ENCODE measurements at regions of chr18 and their contacts with region 1.

Region 1: GRCh38 chr18:42114310-42114943 is 159.4 kb downstream of the PIK3C3 start:
- DNase-seq: peak; percentile 80
- ATAC-seq: peak; percentile 97
- H3K4me3 Mint-ChIP-seq: no peak overlapping the region
- H3K27ac Mint-ChIP-seq: peak overlapping the region; percentile 86
- H3K4me1 Mint-ChIP-seq: peaks cover 15% of the 10 kb centered on the region
- H3K27me3 Mint-ChIP-seq: peaks cover 12% of the 10 kb centered on the region

Region 2: DNA sequence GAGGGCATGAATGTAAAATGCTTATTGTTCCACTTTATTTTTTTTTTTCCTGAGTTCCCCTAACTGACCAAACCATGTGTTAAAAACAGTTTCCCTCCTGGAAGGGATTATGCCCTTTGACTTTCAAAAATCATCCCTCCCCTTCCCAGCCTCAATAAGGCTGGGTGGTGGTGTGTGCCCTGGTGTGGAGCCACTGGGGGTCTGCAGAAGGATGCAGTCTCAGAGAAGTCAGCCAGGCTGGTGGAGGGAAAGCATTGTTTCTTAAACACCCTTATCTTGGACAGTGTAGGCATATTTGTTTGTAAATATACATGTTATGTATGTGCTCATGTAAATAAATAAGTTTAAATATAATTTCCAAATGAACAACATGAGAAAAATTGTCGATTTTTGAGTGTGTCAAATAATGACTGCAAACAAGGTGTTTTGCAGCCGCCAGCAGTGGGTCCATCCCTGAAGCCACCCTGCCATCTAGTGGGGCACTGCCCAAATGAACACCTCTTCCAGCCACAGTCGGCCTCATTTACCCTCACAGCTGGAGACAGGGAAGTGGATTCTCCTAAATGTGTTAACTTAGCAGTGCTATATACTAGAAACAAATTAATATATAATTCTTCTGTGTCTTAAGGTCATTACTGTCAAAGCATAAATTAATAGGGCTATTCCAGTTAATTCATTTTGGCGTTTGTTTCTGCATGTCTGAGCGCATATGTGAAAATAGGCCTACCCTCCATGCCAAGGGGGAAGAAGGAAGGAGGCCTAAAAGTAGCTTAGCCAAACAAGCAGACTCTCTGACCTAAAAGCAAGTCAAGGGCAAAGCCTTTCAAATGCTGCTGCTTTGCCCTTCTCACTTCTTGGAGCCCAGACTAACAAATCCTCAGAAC is 369.0 kb before region 1 on chr18:
- CTCF ChIA-PET with region 1: no interaction called
- DNase-seq: peak; percentile 43
- ATAC-seq: no peak
- H3K4me3 Mint-ChIP-seq: no peak overlapping the region
- H3K27ac Mint-ChIP-seq: no peak overlapping the region
- H3K4me1 Mint-ChIP-seq: no peaks in the 10 kb centered on the region
- H3K27me3 Mint-ChIP-seq: no peaks in the 10 kb centered on the region

Region 3: DNA sequence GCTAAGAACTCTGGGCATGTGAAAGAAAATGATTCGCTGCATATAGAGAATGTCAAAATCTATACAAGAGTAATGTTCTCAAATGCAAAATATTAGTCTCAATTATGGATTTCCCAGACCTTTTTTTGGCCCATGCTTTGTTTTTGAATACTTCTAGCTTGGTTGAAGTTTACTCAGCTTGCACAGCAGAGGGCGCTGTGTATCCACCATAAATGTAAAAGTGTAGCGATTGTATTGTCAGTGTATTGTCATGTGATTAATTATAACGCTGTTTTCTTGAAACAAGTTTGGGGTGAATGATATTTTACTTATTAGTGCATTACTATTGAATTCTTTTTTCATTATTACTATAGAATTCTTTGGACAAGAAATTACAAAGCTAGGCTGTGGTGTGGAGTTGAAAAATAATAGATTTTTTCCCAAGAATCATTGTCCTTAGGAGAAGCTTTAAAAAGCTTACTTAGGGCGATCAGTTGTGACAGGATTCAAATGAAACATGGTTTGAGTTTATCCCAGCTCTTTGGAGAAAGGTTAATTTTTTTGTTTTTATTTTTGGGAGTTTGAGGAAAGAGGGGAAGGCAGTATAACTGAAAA is 61.1 kb before region 1 on chr18:
- CTCF ChIA-PET with region 1: interaction called, 41 read pairs
- DNase-seq: peak; percentile 75
- ATAC-seq: peak; percentile 69
- H3K4me3 Mint-ChIP-seq: no peak overlapping the region
- H3K27ac Mint-ChIP-seq: no peak overlapping the region
- H3K4me1 Mint-ChIP-seq: peaks cover 6% of the 10 kb centered on the region
- H3K27me3 Mint-ChIP-seq: no peaks in the 10 kb centered on the region

Region 4: GRCh38 chr18:42082415-42083234 is 31.8 kb before region 1 on chr18:
- CTCF ChIA-PET with region 1: interaction called, 10 read pairs
- DNase-seq: no peak
- ATAC-seq: peak; percentile 75
- H3K4me3 Mint-ChIP-seq: peak overlapping the region; percentile 55
- H3K27ac Mint-ChIP-seq: peak overlapping the region; percentile 82
- H3K4me1 Mint-ChIP-seq: peaks cover 54% of the 10 kb centered on the region
- H3K27me3 Mint-ChIP-seq: no peaks in the 10 kb centered on the region

Region 5: GRCh38 chr18:42100911-42101310 is 13.5 kb before region 1 on chr18:
- CTCF ChIA-PET with region 1: interaction called, 15 read pairs
- DNase-seq: no peak
- ATAC-seq: peak; percentile 36
- H3K4me3 Mint-ChIP-seq: no peak overlapping the region
- H3K27ac Mint-ChIP-seq: peak overlapping the region; percentile 64
- H3K4me1 Mint-ChIP-seq: peaks cover 12% of the 10 kb centered on the region
- H3K27me3 Mint-ChIP-seq: peaks cover 5% of the 10 kb centered on the region

Region 6: DNA sequence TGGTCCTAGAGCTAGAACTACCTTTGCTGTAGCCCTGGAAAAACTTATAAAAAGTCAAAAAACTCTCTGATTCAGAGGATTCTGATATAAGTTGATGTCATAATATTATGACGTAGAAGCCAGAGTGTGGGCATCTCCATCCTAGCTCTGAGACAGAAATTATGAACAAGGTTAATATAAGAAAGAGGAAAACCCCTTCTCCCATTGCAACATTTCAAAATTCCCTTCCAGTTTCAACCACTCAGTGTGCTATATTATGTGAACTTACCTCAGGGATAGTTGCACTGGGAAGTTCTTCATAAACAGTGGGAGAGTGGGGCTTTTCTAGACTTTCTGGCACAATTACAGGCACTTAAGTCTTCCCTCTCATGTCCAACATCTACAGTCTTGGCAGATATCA is 12.2 kb after region 1 on chr18:
- CTCF ChIA-PET with region 1: interaction called, 19 read pairs
- DNase-seq: no peak
- ATAC-seq: no peak
- H3K4me3 Mint-ChIP-seq: no peak overlapping the region
- H3K27ac Mint-ChIP-seq: no peak overlapping the region
- H3K4me1 Mint-ChIP-seq: no peaks in the 10 kb centered on the region
- H3K27me3 Mint-ChIP-seq: no peaks in the 10 kb centered on the region

Region 7: GRCh38 chr18:42298759-42299675 is 184.6 kb after region 1 on chr18:
- CTCF ChIA-PET with region 1: interaction called, 11 read pairs
- DNase-seq: peak; percentile 71
- ATAC-seq: peak; percentile 53
- H3K4me3 Mint-ChIP-seq: no peak overlapping the region
- H3K27ac Mint-ChIP-seq: no peak overlapping the region
- H3K4me1 Mint-ChIP-seq: no peaks in the 10 kb centered on the region
- H3K27me3 Mint-ChIP-seq: no peaks in the 10 kb centered on the region

Region 8: DNA sequence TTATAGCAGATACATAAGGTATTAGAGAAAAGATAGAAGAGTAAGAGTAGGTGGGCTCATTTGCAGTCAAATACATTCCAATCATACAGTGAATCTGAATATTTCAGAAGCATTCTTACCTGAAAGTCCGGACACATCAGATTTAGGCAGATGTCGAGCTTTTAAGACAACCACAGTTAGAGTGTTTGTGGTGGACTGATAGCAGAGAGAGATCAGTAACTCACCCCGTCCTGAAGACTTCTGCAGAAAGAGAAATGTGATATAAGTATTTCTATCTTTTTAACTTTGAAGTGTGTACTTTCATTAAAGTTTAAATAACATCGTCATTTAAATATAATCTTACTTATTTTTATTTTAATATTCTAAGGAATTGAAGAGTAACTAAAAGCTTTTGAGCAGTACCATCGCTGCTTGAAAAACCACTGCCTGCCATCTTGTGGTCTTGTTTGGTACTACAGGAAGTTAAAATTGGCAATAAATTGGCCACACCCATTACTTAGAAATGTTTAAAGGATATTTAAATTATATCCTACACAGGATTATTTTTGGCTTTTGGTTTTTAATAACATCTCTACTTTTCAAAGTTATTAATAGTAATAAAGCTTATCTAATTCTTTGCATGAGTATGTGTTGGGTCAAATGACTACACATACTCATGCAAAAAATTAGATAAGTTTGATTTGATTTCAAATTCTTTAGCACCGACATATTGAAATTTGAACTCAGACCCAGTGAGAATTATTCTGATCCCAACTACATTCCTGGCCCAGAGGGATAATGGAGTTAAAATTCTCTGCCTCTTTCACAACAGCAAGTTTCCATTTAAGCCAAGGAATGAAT is 1157.4 kb after region 1 on chr18:
- CTCF ChIA-PET with region 1: interaction called, 19 read pairs
- DNase-seq: no peak
- ATAC-seq: no peak
- H3K4me3 Mint-ChIP-seq: no peak overlapping the region
- H3K27ac Mint-ChIP-seq: no peak overlapping the region
- H3K4me1 Mint-ChIP-seq: no peaks in the 10 kb centered on the region
- H3K27me3 Mint-ChIP-seq: peaks cover 3% of the 10 kb centered on the region

Measured in activated CD8-positive, alpha-beta memory T cell treated with anti-CD3 and anti-CD28 coated beads, Interleukin-2, amount 10 ng/mL, durations not matched to agents 7 days and 5 days (primary cell).